Right ventricle myocardium superior (tissue), 1 donor: ENCODE measurements at regions of chr4 and their contacts with region 1.

Region 1: DNA sequence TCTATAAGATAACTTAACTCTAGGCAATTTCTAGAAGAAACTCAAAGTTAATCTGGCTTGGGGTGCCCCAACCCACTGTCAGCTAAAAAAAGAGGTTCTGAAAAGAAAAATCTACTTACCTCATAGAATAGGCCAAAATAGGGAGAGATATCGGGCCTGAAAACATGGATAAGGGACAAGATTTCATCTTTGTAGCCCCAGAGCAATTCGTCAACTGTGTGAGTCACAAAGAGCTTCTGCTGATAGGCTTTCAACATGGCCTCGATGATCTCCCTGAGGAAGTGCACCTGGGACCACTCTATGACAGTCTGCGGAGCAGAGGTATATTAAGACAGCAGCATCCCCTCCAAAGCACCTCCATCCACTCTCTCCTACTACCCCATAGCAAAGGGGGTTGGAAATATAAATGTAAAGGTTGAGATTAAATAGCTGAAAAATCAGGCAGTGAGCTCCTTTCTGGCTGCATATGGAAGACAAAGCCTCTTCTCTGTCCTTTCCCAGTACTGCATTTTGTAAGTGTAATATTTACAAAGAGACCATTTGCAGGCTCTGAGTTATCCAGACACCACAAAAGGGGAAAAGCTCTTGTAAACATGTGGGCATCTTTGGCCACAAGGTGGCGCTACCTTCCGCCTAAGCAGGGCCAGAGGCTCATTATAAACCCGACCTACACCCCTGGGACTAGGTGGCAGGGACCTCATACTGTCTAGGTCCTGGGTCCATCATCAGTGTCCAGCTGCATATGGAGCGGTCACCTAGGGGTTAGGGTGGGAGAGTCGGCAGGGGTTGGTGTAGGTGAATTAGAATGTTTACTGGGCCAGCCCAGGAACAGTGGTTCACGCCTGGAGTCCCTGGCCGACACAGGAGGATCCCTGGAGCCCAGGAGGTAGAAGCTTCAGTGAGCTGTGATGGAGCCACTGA is 31.5 kb upstream of the NUP54 start:
- DNase-seq: peak; percentile 92
- ATAC-seq: peak; percentile 88

Region 2: DNA sequence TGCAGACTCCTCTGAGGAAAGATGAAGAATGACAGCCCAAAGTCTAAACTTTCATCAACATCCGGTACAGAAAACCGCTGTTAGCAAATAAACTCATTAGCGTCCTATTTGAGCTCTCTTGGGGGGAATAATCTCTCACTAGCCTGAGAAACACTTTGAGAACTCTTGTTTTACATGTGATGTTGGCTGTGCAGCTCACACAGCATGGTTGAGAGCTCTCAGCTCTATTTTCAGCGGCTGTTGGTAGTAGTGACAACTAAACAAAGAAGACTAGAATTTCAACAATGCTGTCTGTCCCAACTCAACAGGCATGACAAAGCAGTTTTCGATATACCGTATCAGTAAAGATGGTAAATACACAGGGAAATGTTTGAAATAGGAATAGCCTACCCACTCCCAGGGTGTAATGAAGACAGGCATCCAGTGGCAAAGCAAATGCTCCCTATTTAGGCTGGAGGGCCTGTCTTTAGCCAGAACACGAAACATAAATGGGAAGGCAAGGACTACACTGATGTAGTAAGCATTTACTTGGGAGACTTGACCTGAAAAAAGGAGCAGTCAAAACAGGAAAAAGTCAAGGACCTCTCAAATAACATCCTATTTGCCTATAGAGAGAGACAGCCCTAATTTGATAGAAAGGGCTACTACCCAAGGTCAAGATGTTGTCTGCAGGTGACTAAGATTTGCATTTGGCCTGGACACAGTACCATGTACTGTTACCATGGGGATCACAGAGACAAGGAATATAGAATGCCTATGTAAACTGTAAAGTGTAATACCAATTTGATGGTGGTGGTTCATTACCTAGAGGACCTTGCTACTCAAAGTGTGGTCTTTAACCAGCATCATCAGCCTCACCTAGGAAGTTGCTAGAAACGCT is 337.8 kb before region 1 on chr4:
- intact Hi-C with region 1: no loop called
- DNase-seq: no peak
- ATAC-seq: peak; percentile 89

Region 3: DNA sequence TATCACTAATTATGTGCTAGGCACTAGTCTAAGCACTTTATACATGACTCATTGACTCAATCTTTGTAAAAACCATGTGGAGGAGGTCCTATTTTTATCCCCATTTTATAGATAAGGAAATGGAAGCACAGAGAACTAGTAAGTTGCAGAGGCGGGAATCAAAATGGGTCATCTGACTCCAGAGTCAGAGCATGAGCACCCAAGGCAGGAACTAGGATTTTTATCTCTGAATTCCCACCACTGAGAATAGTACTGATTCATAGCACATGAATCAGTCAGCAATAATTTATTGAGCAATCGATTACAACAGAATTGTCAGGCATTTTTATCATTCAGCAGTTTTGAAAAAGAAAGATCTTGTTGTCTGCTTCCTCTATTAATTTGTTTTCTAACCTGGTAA is 14.7 kb after region 1 on chr4:
- intact Hi-C with region 1: no loop called
- DNase-seq: no peak
- ATAC-seq: peak; percentile 70

Region 4: DNA sequence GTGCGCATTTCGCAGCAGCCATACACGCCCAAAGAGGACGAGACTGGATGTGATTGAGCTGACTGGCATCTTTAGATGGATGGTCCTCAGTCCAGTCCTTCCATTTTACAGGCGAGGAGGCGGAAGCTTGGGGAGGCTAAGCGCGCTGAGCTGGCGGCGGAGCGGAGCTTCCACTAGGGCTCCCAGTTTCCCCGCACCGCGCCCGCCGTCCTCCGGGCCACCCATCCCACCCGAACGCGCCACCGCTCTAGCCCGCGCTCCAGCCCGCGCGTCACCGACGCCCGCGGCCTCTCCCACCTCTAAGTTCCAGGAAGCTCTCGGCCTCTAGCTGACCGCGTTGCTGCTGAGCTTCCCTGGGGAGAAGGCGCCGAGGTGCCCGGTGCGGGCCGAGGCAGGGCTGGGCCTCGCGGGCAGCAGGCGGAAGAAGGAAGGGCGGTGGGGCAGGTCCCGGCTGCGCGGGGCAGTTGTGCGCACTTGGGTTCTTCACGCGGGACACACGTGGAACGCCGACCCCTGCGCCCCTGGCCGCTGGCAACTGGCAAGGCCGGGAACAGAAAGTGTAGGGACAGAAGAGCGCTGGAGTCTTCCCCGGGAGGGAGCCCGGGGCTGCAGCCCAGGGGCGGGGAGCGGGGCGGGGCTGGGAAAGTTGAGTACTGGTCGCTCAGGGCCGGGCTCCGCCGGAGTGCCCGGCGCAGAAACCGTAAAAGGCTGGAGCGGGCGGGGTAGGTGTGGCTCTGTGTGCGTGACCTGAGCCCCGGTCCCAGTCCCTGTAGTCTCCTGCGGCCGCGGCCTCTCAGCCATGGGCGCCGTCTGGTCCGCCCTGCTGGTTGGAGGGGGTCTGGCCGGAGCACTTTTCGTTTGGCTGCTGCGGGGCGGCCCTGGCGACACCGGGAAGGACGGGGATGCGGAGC is 126.6 kb after region 1 on chr4 and contains the start of gene STBD1:
- intact Hi-C with region 1: loop called (anchors 10 kb)
- DNase-seq: peak; percentile 90
- ATAC-seq: peak; percentile 87
- total RNA-seq, gene STBD1: 27.2 TPM

Region 5: GRCh38 chr4:76326515-76326914 is 146.9 kb after region 1 on chr4:
- intact Hi-C with region 1: no loop called
- DNase-seq: no peak
- ATAC-seq: no peak